GM12878 (cell line): ENCODE measurements at regions of chr17 and their contacts with region 1.

Region 1: DNA sequence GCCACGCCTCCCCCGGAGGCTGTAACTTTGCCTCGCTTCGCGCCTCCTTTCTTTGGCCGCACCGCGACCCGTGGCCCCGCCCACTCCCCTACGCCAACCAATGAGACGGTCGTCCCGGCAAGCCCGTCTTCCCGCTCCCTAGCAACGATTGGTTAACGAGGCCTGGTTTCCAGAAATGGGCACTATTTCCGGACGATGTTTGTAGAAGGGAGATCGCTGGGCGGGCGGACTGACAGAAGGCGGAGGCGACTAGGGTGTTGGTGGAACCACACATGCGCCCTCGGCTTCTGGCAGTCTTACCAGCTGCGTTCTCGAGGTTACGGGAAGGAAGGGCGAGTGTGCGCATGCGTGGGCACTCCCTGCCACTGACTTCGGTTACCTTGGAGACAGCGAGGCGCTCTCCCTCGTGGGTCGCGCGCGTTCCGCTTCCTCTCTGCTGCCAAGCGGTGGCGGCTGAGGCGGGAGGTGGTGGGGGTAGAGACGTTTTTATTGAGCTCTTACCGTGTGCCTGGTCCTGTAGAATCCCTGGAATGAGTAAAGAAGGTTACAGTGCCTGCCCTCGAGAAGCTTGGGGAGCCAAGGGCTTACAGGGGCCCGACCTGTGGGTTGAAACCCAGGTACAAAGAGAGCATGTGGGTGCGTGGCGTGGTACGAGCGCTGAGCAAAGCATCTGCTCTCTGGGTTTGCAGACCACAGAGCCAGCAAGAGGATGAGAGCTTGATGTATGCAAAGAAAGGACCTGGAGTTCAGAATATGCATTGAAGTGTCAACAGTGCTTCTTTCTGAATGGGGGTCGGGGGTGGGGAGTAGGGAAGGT is 500 bp upstream of the MAP3K14 start:
- DNase-seq: peak; percentile 100
- ATAC-seq: peak; percentile 81
- H3K4me3 ChIP-seq: peak overlapping the region; percentile 92
- H3K27ac ChIP-seq: peak overlapping the region; percentile 91
- H3K4me1 ChIP-seq: peaks cover 39% of the 10 kb centered on the region
- H3K27me3 ChIP-seq: no peaks in the 10 kb centered on the region
- CTCF ChIP-seq: no peak
- EP300 ChIP-seq: no peak
- POLR2A ChIP-seq: peak; percentile 61
- RAD21 ChIP-seq: no peak

Region 2: GRCh38 chr17:45228763-45229539 is 88.4 kb before region 1 on chr17:
- CTCF ChIA-PET with region 1: interaction called, 10 read pairs
- POLR2A ChIA-PET with region 1: interaction called, 140 read pairs
- RAD21 ChIA-PET with region 1: interaction called, 22 read pairs
- SMC1A ChIA-PET with region 1: interaction called, 16 read pairs
- in situ Hi-C with region 1: no loop called
- intact Hi-C with region 1: loop called (anchors 5 kb)
- DNase-seq: peak; percentile 68
- ATAC-seq: peak; percentile 56
- H3K4me3 ChIP-seq: peak overlapping the region; percentile 89
- H3K27ac ChIP-seq: peak overlapping the region; percentile 100
- H3K4me1 ChIP-seq: peaks cover 66% of the 10 kb centered on the region
- H3K27me3 ChIP-seq: no peaks in the 10 kb centered on the region
- CTCF ChIP-seq: no peak
- EP300 ChIP-seq: peak; percentile 84 to 91; a peak in 2 of 4 replicates
- POLR2A ChIP-seq: peak; percentile 75
- RAD21 ChIP-seq: no peak

Region 3: GRCh38 chr17:45284176-45285140 is 32.9 kb before region 1 on chr17:
- CTCF ChIA-PET with region 1: interaction called, 194 read pairs
- POLR2A ChIA-PET with region 1: interaction called, 4 read pairs
- RAD21 ChIA-PET with region 1: interaction called, 15 read pairs
- SMC1A ChIA-PET with region 1: interaction called, 4 read pairs
- in situ Hi-C with region 1: no loop called
- intact Hi-C with region 1: no loop called
- DNase-seq: no peak
- ATAC-seq: peak; percentile 86
- H3K4me3 ChIP-seq: no peak overlapping the region
- H3K27ac ChIP-seq: peak overlapping the region; percentile 44
- H3K4me1 ChIP-seq: no peaks in the 10 kb centered on the region
- H3K27me3 ChIP-seq: no peaks in the 10 kb centered on the region
- CTCF ChIP-seq: peak; percentile 26 to 45 (median 43); a peak in 3 of 6 replicates
- EP300 ChIP-seq: no peak
- POLR2A ChIP-seq: peak; percentile 40
- RAD21 ChIP-seq: peak; percentile 26; the same call in 1 of the 2 replicates

Region 4: GRCh38 chr17:45293413-45294211 is 23.7 kb before region 1 on chr17:
- CTCF ChIA-PET with region 1: interaction called, 103 read pairs
- POLR2A ChIA-PET with region 1: interaction called, 203 read pairs
- RAD21 ChIA-PET with region 1: interaction called, 216 read pairs
- SMC1A ChIA-PET with region 1: interaction called, 171 read pairs
- in situ Hi-C with region 1: no loop called
- intact Hi-C with region 1: no loop called
- DNase-seq: no peak
- ATAC-seq: peak; percentile 63
- H3K4me3 ChIP-seq: no peak overlapping the region
- H3K27ac ChIP-seq: peak overlapping the region; percentile 42
- H3K4me1 ChIP-seq: peaks cover 76% of the 10 kb centered on the region
- H3K27me3 ChIP-seq: no peaks in the 10 kb centered on the region
- CTCF ChIP-seq: peak in 1 of 3 experiments; percentile 11; a peak in 1 of 6 replicates
- EP300 ChIP-seq: no peak
- POLR2A ChIP-seq: no peak
- RAD21 ChIP-seq: no peak

Region 5: DNA sequence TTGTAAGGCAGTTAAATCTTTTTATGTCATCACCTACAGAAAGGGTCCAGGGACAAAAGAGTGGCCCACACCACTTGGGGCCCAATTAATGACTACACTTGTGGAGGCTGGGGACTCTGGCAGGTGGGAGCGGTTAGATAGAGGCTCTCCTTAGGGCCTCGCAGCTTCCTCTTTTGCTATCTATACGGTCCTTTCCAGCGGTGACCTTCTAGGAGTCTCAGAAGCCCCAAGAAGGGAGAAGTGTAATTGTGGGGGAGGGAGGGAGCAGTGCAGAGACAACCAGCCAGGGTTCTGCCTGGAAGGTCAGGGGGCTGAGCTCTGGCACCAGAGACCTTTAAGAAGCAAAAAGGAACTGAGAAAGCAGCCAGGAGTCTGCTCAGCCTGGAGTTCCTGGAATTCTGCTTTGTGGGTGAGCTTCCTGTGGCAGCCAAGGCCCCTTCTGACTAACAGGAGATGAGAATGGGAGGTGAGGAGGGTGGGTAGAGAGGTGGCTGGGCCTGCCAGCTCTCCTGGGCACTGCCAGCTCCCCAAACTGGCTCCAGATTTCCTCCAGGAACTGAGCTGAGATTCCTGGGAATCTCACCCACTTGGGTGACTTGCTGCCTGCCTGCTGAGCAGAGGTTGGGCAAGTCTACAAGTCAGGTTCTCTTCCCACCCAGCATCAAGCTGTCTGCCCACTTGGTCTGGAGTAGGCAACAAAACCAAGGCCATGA is 15.8 kb after region 1 on chr17:
- CTCF ChIA-PET with region 1: interaction called, 28 read pairs
- POLR2A ChIA-PET with region 1: interaction called, 92 read pairs
- RAD21 ChIA-PET with region 1: interaction called, 22 read pairs
- SMC1A ChIA-PET with region 1: interaction called, 19 read pairs
- in situ Hi-C with region 1: no loop called
- intact Hi-C with region 1: loop called (anchors 1 kb)
- DNase-seq: no peak
- ATAC-seq: peak; percentile 78
- H3K4me3 ChIP-seq: peak overlapping the region; percentile 3; the same call in 1 of the 2 replicates
- H3K27ac ChIP-seq: peak overlapping the region; percentile 33
- H3K4me1 ChIP-seq: peaks cover 43% of the 10 kb centered on the region
- H3K27me3 ChIP-seq: no peaks in the 10 kb centered on the region
- CTCF ChIP-seq: no peak
- EP300 ChIP-seq: peak in 1 of 2 experiments; percentile 42; a peak in 1 of 4 replicates
- POLR2A ChIP-seq: no peak
- RAD21 ChIP-seq: no peak

Region 6: DNA sequence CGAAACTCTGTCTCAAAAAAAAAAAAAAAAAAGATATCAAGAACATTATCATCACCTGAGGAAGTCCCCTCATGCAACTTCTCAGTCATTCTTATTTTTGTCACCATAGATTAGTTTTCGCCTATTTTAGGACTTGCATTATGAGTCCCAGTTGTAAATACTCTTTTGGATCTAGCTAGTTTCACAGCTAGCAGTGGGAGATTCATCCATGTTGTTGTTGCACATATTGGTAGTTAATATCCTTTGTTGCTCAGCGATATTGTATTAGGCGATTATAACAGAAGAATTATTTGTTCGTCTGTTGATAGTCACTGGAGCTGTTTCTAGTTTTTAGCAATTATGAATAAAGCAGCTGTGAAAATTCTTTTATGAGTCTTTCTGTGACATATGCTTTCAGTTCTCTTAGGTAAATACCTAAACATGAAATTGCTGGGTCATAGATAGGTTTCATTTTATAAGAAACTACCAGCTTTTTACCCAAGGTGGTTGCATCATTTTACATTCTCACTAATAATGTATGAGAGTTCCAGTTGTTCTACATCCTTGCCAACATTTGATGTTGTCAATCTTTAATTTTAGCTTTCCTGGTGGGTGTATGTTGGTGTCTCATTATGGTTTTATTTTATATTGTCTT is 40.2 kb after region 1 on chr17:
- CTCF ChIA-PET with region 1: interaction called, 4 read pairs
- POLR2A ChIA-PET with region 1: interaction called, 18 read pairs
- RAD21 ChIA-PET with region 1: interaction called, 22 read pairs
- SMC1A ChIA-PET with region 1: interaction called, 13 read pairs
- in situ Hi-C with region 1: no loop called
- intact Hi-C with region 1: loop called (anchors 1 kb)
- DNase-seq: peak; percentile 63
- ATAC-seq: peak; percentile 80
- H3K4me3 ChIP-seq: no peak overlapping the region
- H3K27ac ChIP-seq: peak overlapping the region; percentile 91
- H3K4me1 ChIP-seq: peaks cover 23% of the 10 kb centered on the region
- H3K27me3 ChIP-seq: no peaks in the 10 kb centered on the region
- CTCF ChIP-seq: no peak
- EP300 ChIP-seq: peak; percentile 24 to 40; a peak in 1 of 4 replicates
- POLR2A ChIP-seq: no peak
- RAD21 ChIP-seq: peak; percentile 14; the same call in 1 of the 2 replicates

Region 7: DNA sequence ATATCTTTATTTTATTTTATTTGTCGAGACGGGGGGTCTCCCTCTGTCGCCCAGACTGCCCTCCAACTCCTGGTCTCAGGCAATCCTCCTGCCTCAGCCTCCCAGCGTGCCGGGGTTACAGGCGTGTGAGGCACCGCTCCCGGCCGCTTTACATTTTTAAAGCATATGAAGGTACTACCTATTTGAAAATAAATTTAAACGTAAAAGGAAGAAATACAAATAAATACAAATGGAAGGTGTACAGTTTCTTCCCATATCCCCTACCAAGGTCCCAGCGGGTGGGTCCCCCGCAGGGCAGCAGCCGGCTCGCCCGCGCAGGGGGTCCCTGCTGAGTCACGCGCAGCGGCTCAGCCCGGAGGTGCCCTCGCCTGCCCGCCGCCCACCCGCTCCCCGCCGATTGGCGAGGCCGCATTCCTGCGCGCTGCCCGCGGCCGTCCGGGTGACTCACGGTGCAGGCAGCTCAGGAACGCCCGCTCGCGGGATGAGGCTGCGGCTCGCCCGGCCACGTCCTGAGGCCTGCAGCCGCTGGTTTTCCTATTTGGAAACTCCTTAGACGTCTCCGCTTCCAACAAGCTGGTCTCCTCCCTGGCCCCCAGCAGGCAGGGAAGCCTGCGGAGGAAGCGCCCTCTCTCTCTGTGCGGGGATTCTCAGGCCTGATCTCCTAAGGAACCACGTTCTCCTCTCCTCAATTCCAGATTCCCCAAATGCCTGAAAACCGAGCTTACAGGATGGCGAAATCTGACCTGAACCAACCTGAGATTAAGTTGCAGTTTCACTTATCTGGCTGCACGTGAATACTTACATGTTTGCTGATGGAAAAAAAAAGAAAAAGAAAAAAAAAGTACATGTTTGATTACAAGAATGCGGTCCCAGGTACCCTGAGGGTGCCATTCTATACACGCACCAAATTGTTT is 54.4 kb after region 1 on chr17:
- CTCF ChIA-PET with region 1: interaction called, 9 read pairs
- POLR2A ChIA-PET with region 1: interaction called, 11 read pairs
- RAD21 ChIA-PET with region 1: interaction called, 17 read pairs
- SMC1A ChIA-PET with region 1: interaction called, 16 read pairs
- in situ Hi-C with region 1: no loop called
- intact Hi-C with region 1: loop called (anchors 2 kb)
- DNase-seq: no peak
- ATAC-seq: no peak
- H3K4me3 ChIP-seq: no peak overlapping the region
- H3K27ac ChIP-seq: 0 out of 2 replicates have a peak overlapping the region, but pooled peaks have one; percentile 17
- H3K4me1 ChIP-seq: peaks cover 33% of the 10 kb centered on the region
- H3K27me3 ChIP-seq: no peaks in the 10 kb centered on the region
- CTCF ChIP-seq: no peak
- EP300 ChIP-seq: no peak
- POLR2A ChIP-seq: no peak
- RAD21 ChIP-seq: no peak